Activated CD4-positive, alpha-beta T cell treated with anti-CD3 and anti-CD28 coated beads for 36 hours (primary cell): ENCODE measurements at regions of chr6 and their contacts with region 1.

Region 1: GRCh38 chr6:43635387-43636307 is at the start of gene MAD2L1BP:
- DNase-seq: peak; percentile 93
- ATAC-seq: peak; percentile 83
- H3K4me3 Mint-ChIP-seq: peak within 1 kb of the TSS; percentile 100
- H3K27ac Mint-ChIP-seq: peak within 1 kb of the TSS; percentile 97
- H3K4me1 Mint-ChIP-seq: peaks cover 41% of the 10 kb centered on the region
- H3K27me3 Mint-ChIP-seq: no peaks in the 10 kb centered on the region
- total RNA-seq, gene MAD2L1BP: 35.1 to 35.3 TPM

Region 2: DNA sequence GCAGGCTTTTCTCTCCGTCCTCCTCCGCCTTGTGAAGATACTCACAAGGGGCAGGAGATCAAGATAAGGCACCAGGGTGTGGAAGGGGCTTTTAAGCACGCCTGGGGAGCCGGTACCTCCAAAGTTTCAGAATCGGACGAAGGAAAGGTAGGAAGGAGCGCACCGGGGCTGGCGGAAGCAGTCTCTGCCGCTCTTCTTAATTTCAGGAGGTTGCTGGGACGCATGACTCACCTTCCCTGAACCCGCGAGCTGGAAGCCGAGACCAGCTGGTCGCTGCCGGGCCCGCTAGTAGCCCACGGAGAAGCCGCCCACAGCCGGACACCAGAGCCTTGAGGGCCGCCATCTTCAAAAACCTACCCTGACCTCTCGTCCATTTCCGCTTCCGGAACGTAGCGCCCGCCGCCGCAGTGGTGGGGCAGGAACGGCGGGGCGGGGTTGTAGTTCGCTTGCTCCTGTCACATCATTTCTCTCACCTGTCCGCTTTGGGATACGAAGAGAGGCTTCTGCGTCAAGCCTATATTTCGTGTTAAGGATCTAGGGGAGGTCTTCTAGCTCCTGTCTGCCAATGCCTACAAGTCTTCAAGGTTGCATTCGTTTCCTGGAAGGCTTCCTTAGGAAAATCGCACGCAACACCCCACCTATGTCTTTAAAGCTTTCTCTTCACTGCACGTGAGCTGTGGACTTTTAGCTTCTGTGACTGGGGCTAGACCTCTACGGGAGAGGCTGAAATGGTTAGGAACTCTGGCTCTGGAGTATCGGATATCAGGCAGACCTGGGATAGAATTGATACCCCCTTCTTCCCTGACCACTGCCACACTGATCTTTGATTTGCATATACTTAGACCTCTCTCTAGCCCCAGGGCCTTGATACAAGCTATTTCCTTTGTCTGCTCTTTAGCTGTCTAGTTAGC is 52.0 kb after region 1 on chr6 and contains the start of gene MRPS18A:
- CTCF ChIA-PET with region 1: no interaction called
- POLR2A ChIA-PET with region 1: no interaction called
- intact Hi-C with region 1: loop called in 1 of 2 experiments (anchors 2 kb)
- DNase-seq: peak; percentile 91
- ATAC-seq: peak; percentile 99
- H3K4me3 Mint-ChIP-seq: peak within 1 kb of the TSS; percentile 90
- H3K27ac Mint-ChIP-seq: peak within 1 kb of the TSS; percentile 89
- H3K4me1 Mint-ChIP-seq: peaks cover 40% of the 10 kb centered on the region
- H3K27me3 Mint-ChIP-seq: no peaks in the 10 kb centered on the region
- total RNA-seq, gene MRPS18A: 54.0 to 68.7 TPM

Region 3: GRCh38 chr6:44002593-44003344 is 367.1 kb after region 1 on chr6:
- CTCF ChIA-PET with region 1: no interaction called
- POLR2A ChIA-PET with region 1: no interaction called
- intact Hi-C with region 1: loop called in 1 of 2 experiments (anchors 5 kb)
- DNase-seq: peak; percentile 87
- ATAC-seq: peak; percentile 65
- H3K4me3 Mint-ChIP-seq: peak overlapping the region; percentile 58
- H3K27ac Mint-ChIP-seq: no peak overlapping the region
- H3K4me1 Mint-ChIP-seq: peaks cover 11% of the 10 kb centered on the region
- H3K27me3 Mint-ChIP-seq: peaks cover 16% of the 10 kb centered on the region